A673 (cell line): ENCODE measurements at regions of chr1 and their contacts with region 1.

Region 1: GRCh38 chr1:55375617-55376258 is 160.6 kb upstream of the USP24 start:
- DNase-seq: peak; percentile 61
- H3K4me3 ChIP-seq: no peak overlapping the region
- H3K27ac ChIP-seq: no peak overlapping the region
- H3K4me1 ChIP-seq: no peaks in the 10 kb centered on the region
- H3K27me3 ChIP-seq: peaks cover under 1% of the 10 kb centered on the region
- CTCF ChIP-seq: peak; percentile 84

Region 2: DNA sequence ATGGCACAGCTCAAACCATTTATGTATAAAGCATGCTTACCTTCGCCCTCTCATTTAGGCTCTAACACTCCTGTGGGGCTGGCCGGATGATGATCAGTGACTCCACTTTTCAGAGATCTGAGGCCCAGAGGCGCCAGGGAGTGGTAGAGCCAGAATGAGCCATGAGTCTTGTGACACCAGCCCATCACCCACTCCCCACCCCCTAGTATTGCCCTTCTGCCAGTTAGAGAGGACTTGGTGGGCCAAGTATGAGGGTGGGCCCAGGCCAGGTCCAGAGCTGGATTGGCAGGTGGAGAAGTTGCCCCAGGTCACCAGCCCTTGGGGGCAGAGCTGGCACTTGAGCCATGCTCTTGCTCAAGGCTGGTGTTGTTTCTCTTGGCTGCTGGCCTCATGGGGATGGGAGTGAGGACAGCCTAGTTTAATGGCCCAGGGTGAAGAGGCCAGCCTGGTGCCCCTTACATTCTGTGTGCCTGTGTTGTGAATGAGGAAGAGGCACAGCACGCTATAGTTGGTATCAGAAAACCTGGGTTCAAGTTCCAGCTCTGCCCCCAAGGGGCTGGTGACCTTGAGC is 690.3 kb before region 1 on chr1:
- CTCF ChIA-PET with region 1: no interaction called
- POLR2A ChIA-PET with region 1: no interaction called
- intact Hi-C with region 1: no loop called
- DNase-seq: no peak
- H3K4me3 ChIP-seq: no peak overlapping the region
- H3K27ac ChIP-seq: no peak overlapping the region
- H3K4me1 ChIP-seq: no peaks in the 10 kb centered on the region
- H3K27me3 ChIP-seq: no peaks in the 10 kb centered on the region
- CTCF ChIP-seq: no peak

Region 3: DNA sequence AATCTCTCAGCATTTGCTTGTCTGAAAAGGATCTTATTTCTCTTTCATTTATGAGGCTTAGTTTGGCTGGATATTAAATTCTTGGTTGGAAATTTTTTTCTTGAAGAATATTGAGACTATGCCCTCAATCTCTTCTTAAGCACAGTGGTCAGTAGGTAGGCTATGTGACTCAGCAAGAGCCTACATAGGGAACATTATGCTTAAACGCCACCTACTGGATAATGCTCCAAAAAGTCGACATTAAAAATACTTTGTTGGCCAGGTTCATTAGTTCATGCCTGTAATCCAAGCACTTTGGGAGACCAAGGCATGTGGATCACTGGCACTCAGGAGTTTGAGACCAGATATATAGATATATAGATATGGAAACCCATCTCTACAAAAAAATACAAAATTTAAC is 517.4 kb after region 1 on chr1:
- CTCF ChIA-PET with region 1: no interaction called
- POLR2A ChIA-PET with region 1: no interaction called
- intact Hi-C with region 1: loop called (anchors 10 kb)
- DNase-seq: peak; percentile 57
- H3K4me3 ChIP-seq: no peak overlapping the region
- H3K27ac ChIP-seq: no peak overlapping the region
- H3K4me1 ChIP-seq: no peaks in the 10 kb centered on the region
- H3K27me3 ChIP-seq: peaks cover 3% of the 10 kb centered on the region
- CTCF ChIP-seq: peak; percentile 63

Region 4: GRCh38 chr1:56578963-56579875 is 1203.5 kb after region 1 on chr1 and contains the start of gene PLPP3:
- CTCF ChIA-PET with region 1: interaction called, 4 read pairs
- POLR2A ChIA-PET with region 1: no interaction called
- intact Hi-C with region 1: loop called (anchors 5 kb)
- DNase-seq: peak; percentile 76
- H3K4me3 ChIP-seq: peak within 1 kb of the TSS; percentile 57
- H3K27ac ChIP-seq: peak within 1 kb of the TSS; percentile 10
- H3K4me1 ChIP-seq: peaks cover 5% of the 10 kb centered on the region
- H3K27me3 ChIP-seq: peaks cover 32% of the 10 kb centered on the region
- CTCF ChIP-seq: peak; percentile 58
- total RNA-seq, gene PLPP3: 0.39 and 0.79 TPM in 2 replicates

Region 5: DNA sequence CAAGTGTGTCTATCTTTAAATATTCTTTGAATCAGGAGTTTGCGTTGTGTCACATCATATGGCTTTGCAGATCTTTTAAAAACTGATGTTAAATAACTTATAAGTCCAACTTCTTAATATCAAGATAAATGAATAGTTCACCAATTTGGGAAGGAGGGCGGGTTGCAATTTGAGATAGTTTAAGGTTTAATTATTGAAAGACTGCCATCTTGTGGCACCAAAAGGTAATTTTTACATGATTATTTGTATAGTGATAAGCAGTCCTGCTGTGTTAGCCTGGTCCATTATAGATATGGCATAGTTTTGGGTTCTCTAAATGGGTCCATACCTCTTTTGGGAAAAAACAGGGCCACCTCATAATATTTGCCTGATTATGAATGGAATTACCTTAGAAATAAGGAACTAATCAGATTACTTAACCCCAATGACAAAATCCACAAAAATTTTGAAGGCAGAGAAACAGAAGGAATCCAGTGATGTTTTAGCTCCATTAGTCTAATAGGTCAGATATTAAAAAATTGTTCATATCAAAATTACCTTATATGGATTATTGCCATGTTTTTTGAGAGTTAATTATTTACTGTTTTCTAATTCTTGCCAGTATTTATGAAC is 1333.6 kb after region 1 on chr1:
- CTCF ChIA-PET with region 1: no interaction called
- POLR2A ChIA-PET with region 1: no interaction called
- intact Hi-C with region 1: loop called (anchors 5 kb)
- DNase-seq: peak; percentile 68
- H3K4me3 ChIP-seq: no peak overlapping the region
- H3K27ac ChIP-seq: no peak overlapping the region
- H3K4me1 ChIP-seq: no peaks in the 10 kb centered on the region
- H3K27me3 ChIP-seq: peaks cover 19% of the 10 kb centered on the region
- CTCF ChIP-seq: peak; percentile 69